Activated T-helper 1 cell treated with anti-CD3 and anti-CD28 coated beads, Interleukin-12 subunit alpha, Interleukin-12 subunit beta, Interleukin-2, Interleukin-4 antibody, amounts not matched to agents 30 ng/mL and 10 ng/mL and 1 ng/mL, durations not matched to agents 14 hours and 24 hours and 36 hours (primary cell): ENCODE measurements at regions of chr7 and their contacts with region 1.

Region 1: GRCh38 chr7:134316539-134317344 is at the start of gene SLC35B4:
- DNase-seq: peak; percentile 91
- H3K4me3 Mint-ChIP-seq: peak within 1 kb of the TSS; percentile 93
- H3K27ac Mint-ChIP-seq: peak within 1 kb of the TSS; percentile 89
- H3K4me1 Mint-ChIP-seq: peaks cover 17% of the 10 kb centered on the region
- H3K27me3 Mint-ChIP-seq: no peaks in the 10 kb centered on the region
- total RNA-seq, gene SLC35B4: 22.4 and 23.3 TPM in 2 replicates

Region 2: DNA sequence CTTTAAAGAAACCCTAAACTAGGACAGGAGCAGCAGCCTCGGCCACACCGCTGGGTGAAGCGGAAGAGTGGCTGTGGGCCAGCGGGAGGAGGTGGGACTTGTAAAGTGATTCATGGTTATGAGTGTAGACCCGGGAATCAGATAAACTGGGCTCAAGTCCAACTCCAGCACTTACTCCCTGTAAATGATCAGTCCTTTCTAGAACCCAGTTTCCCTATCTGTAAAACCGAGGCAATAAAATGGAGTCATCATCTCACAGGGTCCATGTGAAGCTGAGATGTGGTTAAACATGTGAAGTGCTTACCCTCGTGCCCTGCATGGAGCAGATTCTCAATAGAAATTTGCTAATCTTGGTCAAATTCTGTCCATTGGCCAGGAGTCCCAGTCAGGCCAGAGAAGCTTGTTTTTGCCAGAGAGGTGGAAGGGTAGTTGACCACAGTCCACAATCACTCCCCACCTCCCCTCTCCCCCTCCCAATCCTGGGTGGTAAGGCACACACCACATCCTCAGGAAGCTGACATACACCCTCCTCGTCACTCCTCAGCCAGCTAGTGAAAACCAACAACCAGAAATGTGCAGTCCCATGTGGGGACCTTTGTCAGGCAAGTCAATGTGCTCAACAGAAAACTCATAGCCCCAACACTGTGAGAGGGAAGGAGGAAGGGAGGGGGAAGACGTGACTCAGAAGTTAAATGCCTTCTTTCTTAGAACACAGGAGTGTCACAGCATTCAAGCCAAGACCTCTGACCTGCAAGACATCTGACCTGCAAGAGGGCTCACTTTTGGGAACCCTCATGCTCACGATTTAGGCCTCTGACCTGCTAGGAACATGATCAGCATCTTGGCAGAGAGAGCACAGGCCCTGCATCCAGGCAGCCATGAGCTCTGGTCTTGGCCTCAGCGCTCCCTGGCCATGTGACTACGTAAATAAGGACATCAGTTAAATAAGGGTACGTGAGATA is 1885.6 kb before region 1 on chr7:
- intact Hi-C with region 1: loop called (anchors 10 kb)
- DNase-seq: peak; percentile 76
- H3K4me3 Mint-ChIP-seq: peak overlapping the region; percentile 2
- H3K27ac Mint-ChIP-seq: peak overlapping the region; percentile 69
- H3K4me1 Mint-ChIP-seq: peaks cover 74% of the 10 kb centered on the region
- H3K27me3 Mint-ChIP-seq: no peaks in the 10 kb centered on the region

Region 3: DNA sequence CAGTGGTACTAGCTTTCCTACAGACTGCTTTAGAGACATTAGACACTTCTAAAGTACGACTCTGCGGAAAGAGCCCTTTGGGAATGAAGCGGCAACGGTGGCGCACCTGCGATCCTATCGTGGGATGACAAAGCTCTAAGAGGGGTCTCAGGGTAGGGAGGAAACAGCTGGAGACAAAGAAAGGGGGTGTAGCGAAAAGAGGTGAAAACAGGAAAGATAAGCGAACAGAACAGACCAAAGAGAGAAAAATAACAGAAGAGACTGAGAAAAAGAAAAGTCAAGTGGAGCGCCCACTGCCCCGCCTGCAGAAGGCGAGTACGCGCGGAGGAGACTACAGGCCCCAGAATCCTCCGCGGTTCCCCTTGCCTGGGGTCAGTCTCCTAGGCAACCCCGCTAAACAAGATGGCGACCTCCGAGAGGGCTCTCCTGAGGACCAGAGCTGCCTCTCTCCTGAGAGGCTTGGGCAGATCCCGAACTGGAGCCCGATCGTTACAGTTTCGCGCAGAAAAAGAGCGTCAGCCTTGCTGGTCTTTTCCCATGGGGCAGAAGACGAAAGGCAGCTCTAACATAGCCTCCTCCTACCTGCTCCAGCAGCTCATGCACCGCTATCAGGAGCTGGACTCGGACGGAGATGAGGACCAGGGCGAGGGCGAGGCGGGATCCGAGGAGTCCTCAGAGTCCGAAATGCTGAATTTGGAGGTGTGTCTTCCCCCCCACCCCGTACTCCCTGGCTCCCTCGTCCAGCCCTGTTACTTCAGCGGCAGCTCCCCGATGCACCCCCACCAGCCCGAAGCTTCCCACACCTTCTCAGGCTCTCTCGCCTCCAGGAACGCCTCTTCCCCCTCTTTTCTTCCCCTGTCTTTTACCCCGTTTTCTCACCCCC is 189.5 kb before region 1 on chr7 and contains the start of gene LRGUK:
- intact Hi-C with region 1: loop called (anchors 1 kb)
- DNase-seq: peak; percentile 72
- H3K4me3 Mint-ChIP-seq: peak within 1 kb of the TSS; percentile 88
- H3K27ac Mint-ChIP-seq: peak within 1 kb of the TSS; percentile 42
- H3K4me1 Mint-ChIP-seq: peaks cover 14% of the 10 kb centered on the region
- H3K27me3 Mint-ChIP-seq: peaks cover 19% of the 10 kb centered on the region
- total RNA-seq, gene LRGUK: 0.05 TPM in 1 of 2 replicates, not detected in the other

Region 4: DNA sequence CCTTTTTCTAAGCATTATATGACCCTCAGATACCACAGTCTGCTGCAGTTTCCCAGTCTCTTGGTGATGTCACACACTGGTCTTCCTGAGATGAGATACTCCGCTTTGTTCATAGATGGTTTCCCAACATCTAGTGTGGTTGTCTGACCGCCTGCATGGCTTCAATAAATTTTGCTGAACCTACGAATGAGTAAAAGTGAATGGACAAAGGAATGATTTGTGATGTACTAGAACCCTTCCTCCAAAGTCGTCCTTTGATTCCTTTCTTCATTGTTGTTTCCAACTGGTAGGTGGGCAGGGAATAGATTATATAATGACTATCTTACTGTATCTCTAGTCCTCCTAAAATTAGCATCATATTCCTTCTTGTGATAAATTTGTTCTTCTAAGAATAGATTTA is 82.5 kb before region 1 on chr7:
- intact Hi-C with region 1: no loop called
- DNase-seq: no peak
- H3K4me3 Mint-ChIP-seq: no peak overlapping the region
- H3K27ac Mint-ChIP-seq: no peak overlapping the region
- H3K4me1 Mint-ChIP-seq: no peaks in the 10 kb centered on the region
- H3K27me3 Mint-ChIP-seq: no peaks in the 10 kb centered on the region

Region 5: DNA sequence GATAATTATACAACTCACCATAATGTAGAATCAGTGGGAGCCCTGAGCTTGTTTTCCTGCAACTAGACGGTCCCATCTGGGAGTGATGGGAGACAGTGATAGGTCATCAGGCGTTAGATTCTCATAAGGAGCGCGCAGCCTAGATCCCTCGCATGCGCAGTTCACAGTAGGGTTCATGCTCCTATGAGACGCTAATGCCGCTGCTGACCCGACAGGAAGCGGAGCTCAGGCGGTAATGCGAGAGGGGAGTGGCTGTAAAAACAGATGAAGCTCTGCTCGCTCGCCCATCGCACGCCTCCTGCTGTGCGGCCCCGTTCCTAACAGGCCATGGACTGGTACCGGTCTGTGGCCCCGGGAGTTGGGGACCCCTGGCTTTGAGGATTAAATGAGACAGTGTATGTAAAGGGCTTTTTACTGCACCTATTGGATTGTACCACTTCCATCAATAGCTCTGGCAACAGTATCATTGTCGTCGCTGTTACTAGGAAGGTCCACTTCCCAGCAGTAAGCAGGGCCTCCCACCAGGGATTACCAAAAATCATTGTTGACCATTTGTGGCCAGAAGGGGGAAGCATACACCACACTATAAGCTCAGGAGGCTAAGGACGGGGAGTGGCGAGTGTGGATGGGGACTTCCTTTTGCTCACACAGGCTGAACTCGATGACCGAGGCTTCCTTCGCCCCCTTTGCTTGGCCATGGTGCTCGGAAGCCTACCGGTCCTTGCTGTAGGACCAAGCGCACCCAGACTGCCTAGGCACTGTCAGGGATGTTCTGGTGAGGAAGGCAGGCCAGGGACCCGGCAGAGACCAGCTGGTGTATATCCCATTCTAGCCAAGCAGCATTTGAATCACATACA is 115.8 kb after region 1 on chr7:
- intact Hi-C with region 1: loop called (anchors 1 kb)
- DNase-seq: peak; percentile 61
- H3K4me3 Mint-ChIP-seq: peak overlapping the region; percentile 78
- H3K27ac Mint-ChIP-seq: peak overlapping the region; percentile 79
- H3K4me1 Mint-ChIP-seq: peaks cover 23% of the 10 kb centered on the region
- H3K27me3 Mint-ChIP-seq: peaks cover 3% of the 10 kb centered on the region

Region 6: GRCh38 chr7:134724606-134725005 is 407.9 kb after region 1 on chr7:
- intact Hi-C with region 1: no loop called
- DNase-seq: no peak
- H3K4me3 Mint-ChIP-seq: no peak overlapping the region
- H3K27ac Mint-ChIP-seq: no peak overlapping the region
- H3K4me1 Mint-ChIP-seq: no peaks in the 10 kb centered on the region
- H3K27me3 Mint-ChIP-seq: peaks cover 6% of the 10 kb centered on the region

Region 7: GRCh38 chr7:134986363-134987251 is 669.9 kb after region 1 on chr7 and contains the start of gene AGBL3:
- intact Hi-C with region 1: loop called (anchors 1 kb)
- DNase-seq: peak; percentile 87
- H3K4me3 Mint-ChIP-seq: peak within 1 kb of the TSS; percentile 97
- H3K27ac Mint-ChIP-seq: peak within 1 kb of the TSS; percentile 86
- H3K4me1 Mint-ChIP-seq: peaks cover 49% of the 10 kb centered on the region
- H3K27me3 Mint-ChIP-seq: no peaks in the 10 kb centered on the region
- total RNA-seq, gene AGBL3: 1.5 and 1.9 TPM in 2 replicates

Region 8: GRCh38 chr7:135211179-135211945 is 894.6 kb after region 1 on chr7 and contains the start of gene WDR91:
- intact Hi-C with region 1: loop called (anchors 2 kb)
- DNase-seq: peak; percentile 86
- H3K4me3 Mint-ChIP-seq: peak within 1 kb of the TSS; percentile 96
- H3K27ac Mint-ChIP-seq: peak within 1 kb of the TSS; percentile 98
- H3K4me1 Mint-ChIP-seq: peaks cover 47% of the 10 kb centered on the region
- H3K27me3 Mint-ChIP-seq: no peaks in the 10 kb centered on the region
- total RNA-seq, gene WDR91: 34.6 and 35.4 TPM in 2 replicates

Region 9: GRCh38 chr7:135977007-135977741 is 1660.4 kb after region 1 on chr7 and contains the start of gene MTPN:
- intact Hi-C with region 1: loop called (anchors 2 kb)
- DNase-seq: peak; percentile 98
- H3K4me3 Mint-ChIP-seq: peak within 1 kb of the TSS; percentile 98
- H3K27ac Mint-ChIP-seq: peak within 1 kb of the TSS; percentile 88
- H3K4me1 Mint-ChIP-seq: peaks cover 75% of the 10 kb centered on the region
- H3K27me3 Mint-ChIP-seq: peaks cover 2% of the 10 kb centered on the region
- total RNA-seq, gene MTPN: 117 and 119 TPM in 2 replicates